Panc1 (cell line): ENCODE measurements at regions of chr10 and their contacts with region 1.

Region 1: DNA sequence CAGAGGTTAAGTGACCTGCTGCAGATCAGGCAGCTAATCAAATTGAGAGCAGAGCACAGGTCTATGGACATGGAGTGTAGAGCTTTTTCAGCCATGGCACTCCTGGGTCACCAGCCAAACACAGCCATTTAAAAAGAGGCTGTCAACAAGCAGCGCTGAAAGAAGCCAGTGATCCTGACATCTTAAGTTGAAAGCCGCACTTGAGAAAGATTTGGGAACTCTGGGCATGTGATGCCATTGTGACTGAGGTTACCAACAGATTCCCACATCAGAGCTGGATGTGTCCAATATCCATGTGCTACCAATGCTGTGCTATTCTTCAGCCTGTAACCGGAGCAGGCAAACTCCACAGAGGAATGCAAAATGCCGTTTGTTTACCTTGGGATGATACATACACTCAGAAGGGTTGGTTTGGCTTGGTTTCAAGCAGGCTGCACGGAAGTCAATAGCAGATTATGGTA is 56.2 kb upstream of the ABLIM1 start:
- DNase-seq: peak; percentile 93
- ATAC-seq: peak; percentile 86
- H3K4me3 ChIP-seq: peak overlapping the region in 1 of 2 experiments; percentile 38; a peak in 2 of 4 replicates
- H3K27ac ChIP-seq: peak overlapping the region; percentile 100
- H3K4me1 ChIP-seq: peaks cover 94% of the 10 kb centered on the region
- H3K27me3 ChIP-seq: no peaks in the 10 kb centered on the region
- CTCF ChIP-seq: no peak

Region 2: DNA sequence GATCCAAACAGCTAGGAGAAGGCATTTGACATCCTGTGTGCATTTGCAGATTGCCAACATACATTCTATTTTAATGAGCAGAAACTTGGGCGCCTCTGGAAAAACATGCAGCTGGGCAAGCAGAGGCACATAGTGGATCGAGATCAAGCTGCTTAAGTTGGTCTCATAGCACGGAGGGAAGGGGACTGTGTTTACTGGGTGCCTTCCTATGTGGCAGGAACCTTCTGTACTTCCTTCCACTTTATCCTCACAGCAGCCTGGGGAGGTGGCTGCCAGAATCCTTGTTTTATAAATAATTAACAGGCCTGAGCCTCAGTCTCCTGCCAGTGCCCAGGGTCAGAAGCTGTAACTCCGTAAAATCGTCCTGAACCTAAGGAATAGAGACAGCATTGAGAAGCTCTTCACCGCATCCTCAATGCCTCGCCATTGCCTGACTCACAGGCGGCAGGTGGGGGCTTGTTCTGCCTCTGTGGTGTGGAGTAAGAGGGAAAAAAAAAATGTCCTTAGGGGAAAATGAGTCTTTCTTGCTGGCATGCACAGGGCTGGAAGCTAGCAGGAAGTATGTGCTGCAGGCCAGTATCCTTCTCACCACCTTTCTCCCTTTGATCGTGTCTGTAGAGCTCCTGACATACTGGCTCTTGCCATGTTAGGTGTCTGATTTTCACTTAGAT is 469.1 kb before region 1 on chr10:
- CTCF ChIA-PET with region 1: no interaction called
- POLR2A ChIA-PET with region 1: no interaction called
- in situ Hi-C with region 1: no loop called
- intact Hi-C with region 1: no loop called
- DNase-seq: no peak
- ATAC-seq: peak; percentile 50
- H3K4me3 ChIP-seq: no peak overlapping the region
- H3K27ac ChIP-seq: no peak overlapping the region
- H3K4me1 ChIP-seq: peaks cover 5% of the 10 kb centered on the region
- H3K27me3 ChIP-seq: peaks cover 23% of the 10 kb centered on the region
- CTCF ChIP-seq: no peak

Region 3: GRCh38 chr10:114538181-114538906 is 176.0 kb before region 1 on chr10:
- CTCF ChIA-PET with region 1: no interaction called
- POLR2A ChIA-PET with region 1: no interaction called
- in situ Hi-C with region 1: no loop called
- intact Hi-C with region 1: no loop called
- DNase-seq: no peak
- ATAC-seq: no peak
- H3K4me3 ChIP-seq: no peak overlapping the region
- H3K27ac ChIP-seq: no peak overlapping the region
- H3K4me1 ChIP-seq: no peaks in the 10 kb centered on the region
- H3K27me3 ChIP-seq: no peaks in the 10 kb centered on the region
- CTCF ChIP-seq: no peak

Region 4: DNA sequence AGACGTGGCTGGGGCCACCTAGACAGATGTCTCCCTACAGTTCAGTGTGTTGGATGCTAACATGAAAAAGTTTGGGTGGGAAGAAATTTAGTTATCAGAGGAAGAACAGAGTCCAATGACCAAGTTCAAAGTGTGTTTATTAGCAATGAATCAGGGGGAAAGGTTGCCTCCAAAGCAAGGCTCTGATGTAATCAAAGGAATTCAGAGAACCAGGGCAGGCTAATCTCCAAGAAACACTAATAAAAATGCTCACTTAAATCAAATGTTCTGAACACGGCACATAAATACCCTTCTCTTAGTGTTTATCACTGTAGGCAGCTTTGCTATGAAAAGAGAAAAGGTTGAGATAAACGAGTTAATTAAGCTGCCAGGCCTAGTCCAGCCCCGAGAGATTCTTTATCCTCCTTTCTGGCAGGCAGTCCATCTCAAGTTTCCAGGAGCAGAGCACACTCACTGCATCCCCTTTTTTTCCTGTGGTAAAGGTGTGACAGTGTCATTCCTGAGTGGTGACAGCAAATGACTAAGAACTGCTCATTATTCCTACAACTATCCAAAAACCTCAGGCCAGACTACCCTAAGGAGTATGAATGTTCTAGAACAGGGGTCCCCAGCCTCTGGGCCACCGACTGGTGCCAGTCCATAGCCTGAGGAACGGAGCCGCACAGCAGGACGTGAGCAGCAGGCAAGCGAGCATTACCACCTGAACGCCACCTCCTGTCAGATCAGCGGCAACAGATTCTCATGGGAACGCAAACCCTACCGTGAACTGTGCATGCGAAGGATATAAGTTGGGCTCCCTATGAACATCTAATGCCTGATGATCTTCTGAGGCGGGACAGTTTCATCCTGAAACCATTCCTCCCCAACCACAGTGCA is 40.4 kb after region 1 on chr10:
- CTCF ChIA-PET with region 1: no interaction called
- POLR2A ChIA-PET with region 1: interaction called, 4 read pairs
- in situ Hi-C with region 1: no loop called
- intact Hi-C with region 1: loop called (anchors 5 kb)
- DNase-seq: peak; percentile 78
- ATAC-seq: peak; percentile 80
- H3K4me3 ChIP-seq: peak overlapping the region in 1 of 2 experiments; percentile 29; a peak in 2 of 4 replicates
- H3K27ac ChIP-seq: peak overlapping the region; percentile 99
- H3K4me1 ChIP-seq: peaks cover 88% of the 10 kb centered on the region
- H3K27me3 ChIP-seq: no peaks in the 10 kb centered on the region
- CTCF ChIP-seq: peak; percentile 50

Region 5: GRCh38 chr10:114925587-114926586 is 211.6 kb after region 1 on chr10:
- CTCF ChIA-PET with region 1: no interaction called
- POLR2A ChIA-PET with region 1: interaction called, 10 read pairs
- in situ Hi-C with region 1: no loop called
- intact Hi-C with region 1: no loop called
- DNase-seq: no peak
- ATAC-seq: peak; percentile 88
- H3K4me3 ChIP-seq: no peak overlapping the region
- H3K27ac ChIP-seq: no peak overlapping the region
- H3K4me1 ChIP-seq: peaks cover 10% of the 10 kb centered on the region
- H3K27me3 ChIP-seq: no peaks in the 10 kb centered on the region
- CTCF ChIP-seq: no peak